Activated CD4-positive, alpha-beta T cell treated with anti-CD3 and anti-CD28 coated beads, Interleukin-2, amount 10 ng/mL, durations not matched to agents 24 days and 14 days (primary cell): ENCODE measurements at regions of chr6 and their contacts with region 1.

Region 1: GRCh38 chr6:108541838-108542759 is 18.6 kb upstream of the FOXO3 start:
- DNase-seq: peak; percentile 88
- H3K4me3 Mint-ChIP-seq: peak overlapping the region; percentile 22
- H3K27ac Mint-ChIP-seq: no peak overlapping the region
- H3K4me1 Mint-ChIP-seq: peaks cover 9% of the 10 kb centered on the region
- H3K27me3 Mint-ChIP-seq: peaks cover 45% of the 10 kb centered on the region

Region 2: DNA sequence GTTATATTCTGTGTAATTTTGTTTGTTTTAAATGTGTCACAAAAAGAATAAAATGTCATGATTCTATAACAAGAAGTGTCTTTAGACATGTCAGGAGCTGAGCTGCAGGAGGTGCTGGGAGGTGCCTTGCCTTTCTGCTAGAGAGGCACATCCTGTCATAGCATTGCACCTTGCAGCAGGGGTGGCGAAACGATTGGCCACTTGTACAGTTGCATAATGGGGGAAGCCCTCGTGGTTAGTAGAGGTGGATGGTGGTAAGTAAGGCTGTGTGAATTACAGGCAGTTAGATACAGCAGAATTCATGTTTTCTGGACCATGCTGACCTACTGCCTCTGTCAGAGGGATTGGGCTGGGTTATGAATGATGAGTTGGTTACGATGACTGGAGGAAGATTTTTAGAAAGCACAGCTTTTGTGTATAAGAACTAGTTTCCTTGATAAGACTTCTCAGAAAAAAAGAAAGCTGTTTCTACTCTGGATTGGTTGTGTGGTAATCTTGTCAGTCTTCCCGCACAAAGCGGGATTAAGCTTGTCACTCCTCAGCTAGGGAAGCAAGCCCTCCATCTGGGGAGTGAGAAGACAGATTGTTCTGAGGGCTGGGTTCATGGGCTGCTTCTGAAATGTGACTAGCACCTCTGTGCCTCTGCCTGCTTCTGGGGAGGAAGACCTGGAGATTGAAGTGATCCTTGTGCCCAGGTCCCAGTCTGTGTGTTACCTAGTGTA is 93.6 kb after region 1 on chr6:
- intact Hi-C with region 1: no loop called
- DNase-seq: peak; percentile 73
- H3K4me3 Mint-ChIP-seq: no peak overlapping the region
- H3K27ac Mint-ChIP-seq: no peak overlapping the region
- H3K4me1 Mint-ChIP-seq: peaks cover 20% of the 10 kb centered on the region
- H3K27me3 Mint-ChIP-seq: peaks cover 2% of the 10 kb centered on the region

Region 3: DNA sequence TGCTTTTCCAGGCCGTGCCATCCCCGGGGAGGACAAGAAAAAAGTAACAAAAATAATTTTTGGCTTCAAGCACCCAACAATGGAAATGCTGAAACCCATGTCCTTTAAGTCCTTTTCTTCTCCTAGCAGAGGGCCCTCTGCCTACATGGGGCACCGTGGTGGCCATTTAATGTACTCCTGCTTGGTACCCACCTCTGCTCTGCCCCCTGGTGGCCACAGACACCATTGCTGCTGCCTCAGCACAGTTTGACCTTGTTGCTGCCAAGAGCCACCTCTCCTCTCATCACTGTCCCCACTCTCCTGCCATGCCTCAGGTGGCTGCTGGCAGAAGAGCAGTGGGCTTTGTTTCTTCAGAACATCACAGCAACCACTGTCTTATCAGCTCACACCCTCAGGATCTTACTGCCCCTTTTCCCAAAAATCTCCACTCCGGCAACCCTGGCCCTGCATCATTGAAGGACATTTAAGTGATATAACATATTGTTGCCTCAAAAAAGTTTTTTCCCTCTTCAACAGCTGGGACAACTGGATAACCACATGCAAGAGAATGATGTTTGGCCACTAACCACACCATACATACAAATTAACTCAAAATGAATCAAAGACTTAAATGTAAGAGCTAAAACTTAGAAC is 293.2 kb after region 1 on chr6:
- intact Hi-C with region 1: loop called (anchors 1 kb)
- DNase-seq: peak; percentile 94
- H3K4me3 Mint-ChIP-seq: no peak overlapping the region
- H3K27ac Mint-ChIP-seq: peak overlapping the region; percentile 14
- H3K4me1 Mint-ChIP-seq: peaks cover 26% of the 10 kb centered on the region
- H3K27me3 Mint-ChIP-seq: peaks cover 18% of the 10 kb centered on the region

Region 4: DNA sequence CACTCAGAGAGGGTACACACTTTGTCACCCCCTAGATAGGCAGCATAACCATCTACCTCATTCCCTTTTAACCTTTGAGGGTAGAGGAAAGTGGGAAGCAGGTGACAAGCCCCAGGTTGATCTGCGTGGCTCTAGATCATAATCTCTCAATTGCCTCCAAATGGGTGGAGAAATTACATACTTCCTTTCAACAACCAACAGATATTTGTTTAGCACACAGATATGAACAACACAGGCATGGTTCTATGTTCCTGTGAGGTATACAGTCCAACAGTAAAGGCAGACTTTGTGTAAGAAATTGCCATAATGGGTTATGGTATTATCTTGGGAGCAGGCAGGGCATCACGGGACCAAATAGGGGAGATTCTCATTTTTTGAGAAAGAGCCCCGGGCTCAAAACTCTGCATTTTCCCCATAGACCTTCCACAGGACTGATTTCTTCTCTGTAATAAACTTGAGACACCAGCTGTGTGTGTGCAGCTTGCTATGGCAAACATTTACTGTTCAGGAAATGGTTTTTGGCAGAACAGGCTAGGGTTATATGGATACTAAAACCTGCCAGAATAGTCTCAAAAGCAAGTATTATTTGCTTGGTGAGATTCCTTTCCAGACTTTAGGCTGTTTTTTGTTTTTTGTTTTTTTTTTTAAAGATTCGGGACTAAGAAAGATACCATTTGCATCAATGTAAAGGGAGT is 714.0 kb after region 1 on chr6:
- intact Hi-C with region 1: no loop called
- DNase-seq: no peak
- H3K4me3 Mint-ChIP-seq: no peak overlapping the region
- H3K27ac Mint-ChIP-seq: no peak overlapping the region
- H3K4me1 Mint-ChIP-seq: no peaks in the 10 kb centered on the region
- H3K27me3 Mint-ChIP-seq: peaks cover 4% of the 10 kb centered on the region